Activated T-helper 1 cell treated with anti-CD3 and anti-CD28 coated beads, Interleukin-12 subunit alpha, Interleukin-12 subunit beta, Interleukin-2, Interleukin-4 antibody, amounts not matched to agents 30 ng/mL and 10 ng/mL and 1 ng/mL, durations not matched to agents 14 hours and 24 hours and 36 hours (primary cell): ENCODE measurements at regions of chr19 and their contacts with region 1.

Region 1: DNA sequence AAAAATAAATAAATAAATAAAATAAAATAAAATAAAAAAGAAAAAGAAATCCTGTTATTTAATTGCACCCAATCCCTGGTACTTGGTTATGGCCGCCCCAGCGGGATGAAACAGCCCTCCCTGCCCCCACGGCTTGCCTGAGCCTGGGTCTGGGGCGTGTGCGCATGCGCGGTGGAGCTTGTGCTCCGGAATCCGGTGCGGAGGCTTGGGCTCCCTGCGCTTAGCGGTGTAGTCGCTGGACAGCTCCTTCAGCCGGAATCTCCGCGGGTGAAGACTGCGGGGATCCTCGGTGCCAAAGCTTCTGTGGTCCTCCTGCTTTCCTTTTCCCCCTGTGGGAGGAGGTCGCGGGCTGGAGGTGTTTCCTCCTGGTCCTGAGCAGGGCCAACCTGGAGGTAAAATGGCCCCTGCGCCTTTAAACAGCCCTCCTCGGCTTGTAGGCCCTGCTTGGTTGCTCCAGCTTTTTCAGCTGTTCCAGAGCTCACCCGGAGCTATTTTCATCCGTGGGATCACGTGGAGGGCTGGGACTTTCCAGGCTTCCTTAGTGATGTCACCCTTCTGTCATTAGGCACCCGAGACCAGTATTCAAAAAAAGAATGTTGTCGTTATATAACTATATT is at the start of gene PLA2G4C:
- DNase-seq: peak; percentile 76
- H3K4me3 Mint-ChIP-seq: peak within 1 kb of the TSS; percentile 89
- H3K27ac Mint-ChIP-seq: peak within 1 kb of the TSS; percentile 93
- H3K4me1 Mint-ChIP-seq: peaks cover 15% of the 10 kb centered on the region
- H3K27me3 Mint-ChIP-seq: no peaks in the 10 kb centered on the region
- total RNA-seq, gene PLA2G4C: 12.2 and 12.7 TPM in 2 replicates

Region 2: GRCh38 chr19:48152551-48152950 is 42.1 kb after region 1 on chr19:
- intact Hi-C with region 1: loop called (anchors 1 kb)
- DNase-seq: peak; percentile 44
- H3K4me3 Mint-ChIP-seq: no peak overlapping the region
- H3K27ac Mint-ChIP-seq: no peak overlapping the region
- H3K4me1 Mint-ChIP-seq: no peaks in the 10 kb centered on the region
- H3K27me3 Mint-ChIP-seq: no peaks in the 10 kb centered on the region

Region 3: GRCh38 chr19:48186541-48186991 is 76.1 kb after region 1 on chr19:
- intact Hi-C with region 1: no loop called
- DNase-seq: no peak
- H3K4me3 Mint-ChIP-seq: no peak overlapping the region
- H3K27ac Mint-ChIP-seq: no peak overlapping the region
- H3K4me1 Mint-ChIP-seq: no peaks in the 10 kb centered on the region
- H3K27me3 Mint-ChIP-seq: no peaks in the 10 kb centered on the region